ENCODE measurements at regions of chr7 and their contacts with region 1.

Region 1: DNA sequence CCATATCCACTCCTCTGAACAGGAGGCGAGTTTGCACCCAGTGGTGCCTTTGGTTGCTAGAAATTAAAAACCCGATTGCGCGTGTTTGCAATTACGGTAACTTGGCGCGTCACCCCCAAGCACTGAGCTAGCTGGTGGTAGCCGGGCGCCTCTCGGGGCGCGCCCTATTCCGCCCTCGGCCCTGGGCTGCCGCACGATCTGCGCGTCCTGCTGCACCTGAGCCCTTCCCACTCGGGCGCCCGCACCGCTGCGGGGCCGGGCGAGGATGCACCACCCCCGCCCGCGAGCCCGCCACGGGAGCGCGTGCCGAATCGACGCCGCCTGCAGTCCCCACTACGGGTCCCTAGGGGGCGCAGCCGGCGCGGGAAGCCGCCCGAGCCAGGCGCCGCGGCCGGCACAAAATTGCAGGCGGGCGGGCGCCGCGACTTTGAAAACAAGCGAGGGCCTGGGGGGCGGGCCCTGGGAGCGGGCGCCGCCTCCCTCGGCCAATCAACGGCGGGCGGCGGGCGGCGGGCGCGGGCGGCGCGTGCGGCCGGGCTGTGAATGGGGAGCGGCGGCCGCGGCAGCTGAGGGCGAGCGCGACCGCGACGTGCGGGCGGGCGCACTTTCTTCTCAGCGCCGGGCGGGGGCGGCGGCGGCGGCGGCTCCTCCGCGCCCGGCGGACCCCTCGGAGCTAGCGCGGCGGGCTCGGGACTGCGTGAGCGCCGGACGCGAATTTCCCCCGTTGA is at the start of gene SDK1:
- DNase-seq: peak; percentile 47 to 94
- H3K4me3 ChIP-seq: peak within 1 kb of the TSS; percentile 64 to 85 (median 72)
- H3K27ac ChIP-seq: no peak within 1 kb of the TSS
- H3K4me1 ChIP-seq: peaks cover 2 to 8% (median 5%) of the 10 kb centered on the region in 4 experiments; a peak in 6 of 7 replicates
- H3K27me3 ChIP-seq: peaks cover 0 to 9% (median 0%) of the 10 kb centered on the region in 4 experiments; a peak in 3 of 7 replicates
- CTCF ChIP-seq: peak; percentile 67 to 89 (median 74)
- EP300 ChIP-seq: peak in 1 of 2 experiments; percentile 51; a peak in 1 of 3 replicates
- POLR2A ChIP-seq: no peak
- RAD21 ChIP-seq: peak; percentile 71 to 85
- total RNA-seq, gene SDK1: 7.2 and 7.3 TPM in 2 replicates

Region 2: GRCh38 chr7:3289996-3290395 is 10.8 kb before region 1 on chr7:
- CTCF ChIA-PET with region 1: interaction called, 15 read pairs
- POLR2A ChIA-PET with region 1: no interaction called
- DNase-seq: no peak
- H3K4me3 ChIP-seq: no peak overlapping the region
- H3K27ac ChIP-seq: no peak overlapping the region
- H3K4me1 ChIP-seq: peaks cover 0 to 6% (median 1%) of the 10 kb centered on the region in 4 experiments; a peak in 3 of 7 replicates
- H3K27me3 ChIP-seq: no peaks in the 10 kb centered on the region; a peak in 1 of 7 replicates
- CTCF ChIP-seq: no peak
- EP300 ChIP-seq: no peak
- POLR2A ChIP-seq: no peak
- RAD21 ChIP-seq: no peak

Measured in H1 (cell line).